Dendritic cell treated with granulocyte-macrophage colony-stimulating factor and Interleukin-4, amounts not matched to agents 40 ng/mL and 50 ng/mL, for 4 days (primary cell): ENCODE measurements at regions of chr9 and their contacts with region 1.

Region 1: GRCh38 chr9:70791936-70792335 is 329.5 kb downstream of the TRPM3 start:
- H3K4me3 Mint-ChIP-seq: no peak overlapping the region
- H3K27ac Mint-ChIP-seq: no peak overlapping the region
- H3K4me1 Mint-ChIP-seq: no peaks in the 10 kb centered on the region
- H3K27me3 Mint-ChIP-seq: no peaks in the 10 kb centered on the region

Region 2: DNA sequence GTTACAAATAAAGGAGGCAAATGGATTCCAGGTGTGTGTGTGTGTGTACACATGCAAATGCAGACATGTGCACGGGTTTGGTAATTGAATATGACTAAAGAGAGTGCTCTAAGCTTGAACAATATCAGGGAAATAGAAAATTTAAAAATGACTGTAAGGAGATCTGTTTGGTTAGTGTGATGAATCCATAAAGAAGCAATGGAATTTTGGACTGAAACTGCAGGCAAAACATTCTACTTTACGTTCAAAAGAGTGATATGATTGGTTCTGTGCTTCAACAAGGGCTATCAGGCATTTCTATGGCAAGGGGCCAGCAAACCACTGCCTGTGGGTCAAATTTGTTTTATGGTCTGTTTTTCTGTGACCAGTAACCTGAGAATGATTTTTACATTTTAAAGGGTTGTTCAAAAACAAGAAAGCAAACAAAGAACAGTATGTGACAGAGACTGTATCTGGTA is 44.6 kb before region 1 on chr9:
- intact Hi-C with region 1: no loop called
- H3K4me3 Mint-ChIP-seq: no peak overlapping the region
- H3K27ac Mint-ChIP-seq: no peak overlapping the region
- H3K4me1 Mint-ChIP-seq: no peaks in the 10 kb centered on the region
- H3K27me3 Mint-ChIP-seq: no peaks in the 10 kb centered on the region

Region 3: GRCh38 chr9:70840266-70840665 is 48.3 kb after region 1 on chr9:
- intact Hi-C with region 1: loop called (anchors 10 kb)
- H3K4me3 Mint-ChIP-seq: no peak overlapping the region
- H3K27ac Mint-ChIP-seq: no peak overlapping the region
- H3K4me1 Mint-ChIP-seq: no peaks in the 10 kb centered on the region
- H3K27me3 Mint-ChIP-seq: no peaks in the 10 kb centered on the region